ENCODE measurements at regions of chr4 and their contacts with region 1.

Region 1: DNA sequence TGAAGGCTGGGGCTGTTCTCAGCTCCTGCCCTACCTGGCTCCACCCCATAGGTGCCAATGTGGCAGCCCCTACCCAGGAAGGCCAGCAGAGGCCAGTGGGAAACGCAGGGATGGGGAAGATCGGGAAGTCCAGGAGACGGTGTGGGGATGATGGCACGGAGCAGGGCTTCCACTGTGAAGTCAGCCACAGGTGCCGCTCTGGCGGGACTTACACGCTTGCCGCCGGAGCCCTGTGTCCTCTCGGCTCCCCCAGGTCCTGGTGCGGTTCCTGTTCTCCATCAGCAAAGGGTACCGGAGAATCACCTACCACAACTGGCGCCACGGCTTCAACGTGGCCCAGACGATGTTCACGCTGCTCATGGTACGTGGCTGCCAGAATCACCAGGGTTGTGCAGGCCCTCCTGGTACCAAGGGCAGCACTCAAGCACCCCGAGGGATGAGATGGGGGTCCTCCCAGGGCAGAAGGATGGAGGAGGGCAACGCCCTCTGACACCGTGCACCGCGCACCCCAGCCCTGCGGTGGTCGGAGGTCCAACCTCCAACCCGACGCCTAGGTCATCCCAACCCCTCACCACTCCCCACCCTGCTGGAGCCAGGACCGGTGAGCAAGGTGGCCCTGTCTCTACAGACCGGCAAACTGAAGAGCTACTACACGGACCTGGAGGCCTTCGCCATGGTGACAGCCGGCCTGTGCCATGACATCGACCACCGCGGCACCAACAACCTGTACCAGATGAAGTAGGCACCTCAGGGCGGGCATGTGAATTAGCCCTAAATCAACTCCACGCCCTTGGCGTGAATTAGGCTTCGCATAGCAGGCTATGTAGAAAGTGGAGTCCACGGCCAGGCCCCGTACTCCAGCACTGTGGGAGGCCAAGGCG is 12.0 kb downstream of the ATP5ME start:
- DNase-seq: no peak
- H3K4me3 ChIP-seq: no peak overlapping the region
- H3K27me3 ChIP-seq: no peaks in the 10 kb centered on the region
- CTCF ChIP-seq: no peak

Region 2: GRCh38 chr4:646460-646859 is 15.7 kb before region 1 on chr4:
- CTCF ChIA-PET with region 1: no interaction called
- POLR2A ChIA-PET with region 1: no interaction called
- DNase-seq: no peak
- H3K4me3 ChIP-seq: no peak overlapping the region
- H3K27me3 ChIP-seq: no peaks in the 10 kb centered on the region
- CTCF ChIP-seq: no peak

Region 3: DNA sequence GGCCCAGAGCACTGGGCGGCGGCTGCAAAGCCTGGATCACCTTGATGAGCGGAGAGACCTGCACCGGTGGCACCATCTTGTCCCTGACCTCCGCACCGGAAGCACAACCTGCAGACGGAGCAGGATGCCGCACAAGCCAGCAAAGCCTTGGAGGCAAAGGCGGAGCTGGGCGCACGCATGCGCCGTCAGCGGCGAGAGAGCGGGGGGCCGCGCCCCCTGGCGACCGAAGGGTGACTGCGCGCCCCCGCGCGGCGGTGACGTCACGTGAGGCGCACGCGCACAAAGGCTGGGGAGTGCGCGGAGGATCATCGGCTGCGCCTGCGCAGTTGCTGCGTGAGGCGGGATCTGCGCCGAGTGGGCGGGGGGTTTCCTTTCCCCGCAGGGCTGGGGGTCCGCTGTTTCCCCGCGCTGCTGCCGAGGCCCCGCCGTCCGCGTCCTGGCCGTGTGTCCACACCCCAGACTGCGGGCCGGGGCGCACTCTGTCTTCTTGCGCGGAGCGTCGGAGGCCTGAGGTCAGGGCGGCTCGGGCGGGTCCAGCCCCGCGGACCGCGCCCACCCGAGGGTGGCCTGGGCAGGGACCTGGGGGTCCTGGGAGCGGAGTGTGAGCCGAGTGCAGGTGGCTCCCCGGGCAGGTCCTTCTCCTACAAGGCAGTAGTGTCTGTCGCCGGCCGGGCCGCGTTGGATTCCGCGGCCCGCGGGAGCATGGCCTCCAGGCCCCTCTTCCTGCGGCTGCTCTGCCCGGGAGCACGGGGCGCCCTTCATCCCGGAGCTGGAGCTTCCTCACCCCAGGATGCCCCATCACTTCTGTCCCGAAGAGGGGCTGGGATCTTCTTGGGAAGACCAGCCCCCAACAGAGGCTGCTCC is 12.3 kb after region 1 on chr4 and contains the starts of genes ATP5ME and MYL5:
- CTCF ChIA-PET with region 1: interaction called, 9 read pairs
- POLR2A ChIA-PET with region 1: interaction called, 16 read pairs
- DNase-seq: peak; percentile 83
- H3K4me3 ChIP-seq: peak within 1 kb of the TSS; percentile 89
- H3K27me3 ChIP-seq: no peaks in the 10 kb centered on the region
- CTCF ChIP-seq: peak; percentile 63
- polyA plus RNA-seq, gene ATP5ME: 275 and 330 TPM in 2 replicates
- polyA plus RNA-seq, gene MYL5: 21.6 and 24.4 TPM in 2 replicates

Region 4: GRCh38 chr4:912548-913279 is 250.6 kb after region 1 on chr4:
- CTCF ChIA-PET with region 1: no interaction called
- POLR2A ChIA-PET with region 1: no interaction called
- DNase-seq: no peak
- H3K4me3 ChIP-seq: no peak overlapping the region
- H3K27me3 ChIP-seq: no peaks in the 10 kb centered on the region
- CTCF ChIP-seq: no peak

Measured in BJ (cell line).